ENCODE measurements at regions of chr6 and their contacts with region 1.

Region 1: DNA sequence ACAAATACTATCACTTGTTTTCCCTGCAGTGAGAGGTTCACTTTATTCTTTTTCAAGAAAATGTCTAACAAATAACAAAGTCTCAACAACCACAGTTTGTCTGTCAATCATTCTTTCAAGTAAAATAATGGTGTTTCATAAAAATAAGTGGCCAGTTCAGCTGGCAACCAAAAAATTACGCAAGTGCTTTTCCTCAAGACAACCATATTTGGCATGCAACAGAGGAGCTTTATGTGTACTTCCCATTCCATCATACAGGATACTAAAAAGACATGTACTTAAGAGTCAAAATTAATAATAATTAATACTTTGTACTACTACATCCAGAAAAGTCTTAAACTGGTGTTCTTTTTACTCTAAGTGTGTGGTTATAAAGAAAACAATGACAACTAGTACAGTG is 34.6 kb downstream of the ATG5 start:
- H3K4me3 Mint-ChIP-seq: no peak overlapping the region
- H3K27ac Mint-ChIP-seq: no peak overlapping the region
- H3K4me1 Mint-ChIP-seq: peaks cover 2% of the 10 kb centered on the region
- H3K27me3 Mint-ChIP-seq: no peaks in the 10 kb centered on the region

Region 2: DNA sequence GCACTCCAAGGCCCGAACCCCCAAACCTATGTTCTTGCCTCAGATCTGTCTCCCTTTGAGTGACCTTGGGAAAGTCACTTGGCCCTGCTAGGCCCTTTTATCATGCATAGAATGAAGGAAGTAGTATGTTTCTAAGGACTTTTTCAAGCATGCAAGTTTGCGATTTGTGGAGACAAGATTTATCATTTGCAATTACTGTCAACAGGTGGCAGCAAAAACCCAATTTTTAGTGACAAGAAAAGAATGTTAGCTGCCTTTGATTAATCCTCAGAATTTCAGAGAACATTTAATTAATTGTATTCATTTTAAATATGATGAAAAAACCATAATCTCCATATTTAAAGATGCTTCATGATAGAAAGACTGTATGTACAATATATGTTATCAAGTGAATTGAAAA is 859.7 kb before region 1 on chr6:
- intact Hi-C with region 1: loop called (anchors 10 kb)
- H3K4me3 Mint-ChIP-seq: no peak overlapping the region
- H3K27ac Mint-ChIP-seq: no peak overlapping the region
- H3K4me1 Mint-ChIP-seq: no peaks in the 10 kb centered on the region
- H3K27me3 Mint-ChIP-seq: no peaks in the 10 kb centered on the region

Region 3: GRCh38 chr6:105941621-105942412 is 349.1 kb before region 1 on chr6:
- intact Hi-C with region 1: no loop called
- H3K4me3 Mint-ChIP-seq: no peak overlapping the region
- H3K27ac Mint-ChIP-seq: peak overlapping the region; percentile 0
- H3K4me1 Mint-ChIP-seq: peaks cover 40% of the 10 kb centered on the region
- H3K27me3 Mint-ChIP-seq: no peaks in the 10 kb centered on the region

Measured in dendritic cell treated with granulocyte-macrophage colony-stimulating factor and Interleukin-4, amounts not matched to agents 40 ng/mL and 50 ng/mL, for 4 days (primary cell).